ENCODE measurements at regions of chr22 and their contacts with region 1.

Region 1: GRCh38 chr22:43993027-43993760 is 30.9 kb upstream of the PARVB start:
- DNase-seq: peak; percentile 88
- H3K4me3 ChIP-seq: peak overlapping the region in 1 of 2 experiments; percentile 27; a peak in 1 of 4 replicates
- H3K27ac ChIP-seq: no peak overlapping the region; a peak in 1 of 4 replicates
- H3K4me1 ChIP-seq: peaks cover 0 to 6% of the 10 kb centered on the region in 2 experiments; a peak in 1 of 4 replicates
- H3K27me3 ChIP-seq: no peaks in the 10 kb centered on the region
- CTCF ChIP-seq: peak; percentile 98
- EP300 ChIP-seq: no peak
- RAD21 ChIP-seq: peak; percentile 91

Region 2: GRCh38 chr22:44003405-44004103 is 10.4 kb after region 1 on chr22:
- CTCF ChIA-PET with region 1: interaction called, 37 read pairs
- POLR2A ChIA-PET with region 1: interaction called, 3 read pairs
- DNase-seq: no peak
- H3K4me3 ChIP-seq: no peak overlapping the region
- H3K27ac ChIP-seq: no peak overlapping the region
- H3K4me1 ChIP-seq: no peaks in the 10 kb centered on the region
- H3K27me3 ChIP-seq: no peaks in the 10 kb centered on the region
- CTCF ChIP-seq: no peak
- EP300 ChIP-seq: no peak
- RAD21 ChIP-seq: no peak

Region 3: DNA sequence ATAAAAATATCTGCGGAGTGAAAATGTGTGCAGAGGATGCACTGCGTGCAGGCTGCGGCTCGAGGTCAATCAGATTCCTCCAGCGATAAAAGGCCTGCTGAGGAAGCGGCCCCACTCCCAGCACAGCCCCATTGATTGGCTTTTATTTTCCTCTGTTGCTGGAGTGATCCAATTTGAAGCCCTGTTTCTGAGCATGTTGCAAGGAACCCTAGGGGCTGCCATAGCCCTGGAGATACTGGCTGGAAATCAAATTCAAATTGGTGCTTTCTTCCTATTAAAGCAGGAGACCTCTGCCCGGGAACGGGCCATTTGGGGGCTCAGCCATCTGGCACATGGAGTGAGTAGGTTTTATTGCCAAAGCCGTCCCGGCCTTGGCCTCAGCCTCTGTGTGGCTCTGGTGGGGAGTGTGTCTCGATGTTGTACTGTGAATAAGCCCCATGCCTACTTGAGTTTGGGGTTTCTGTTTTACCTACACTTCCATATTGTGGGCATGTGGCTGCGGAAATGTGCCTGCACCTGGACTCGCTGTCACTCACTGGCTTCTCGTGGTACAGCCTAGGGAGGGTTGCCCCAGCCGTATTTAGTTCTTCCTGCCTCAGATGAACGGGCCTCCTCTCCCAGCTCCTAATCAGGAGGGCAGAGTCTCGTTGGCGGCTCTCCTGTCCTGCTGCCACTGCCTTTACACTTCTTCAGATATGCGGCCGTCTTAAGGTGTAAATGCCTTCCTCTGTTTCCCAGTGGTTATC is 56.5 kb after region 1 on chr22:
- CTCF ChIA-PET with region 1: interaction called, 10 read pairs
- POLR2A ChIA-PET with region 1: no interaction called
- DNase-seq: peak; percentile 82
- H3K4me3 ChIP-seq: no peak overlapping the region
- H3K27ac ChIP-seq: peak overlapping the region in 1 of 2 experiments; percentile 73; a peak in 2 of 4 replicates
- H3K4me1 ChIP-seq: peaks cover 0 to 23% of the 10 kb centered on the region in 2 experiments; a peak in 1 of 4 replicates
- H3K27me3 ChIP-seq: no peaks in the 10 kb centered on the region
- CTCF ChIP-seq: no peak
- EP300 ChIP-seq: 0 out of 4 replicates have a peak, but pooled peaks of 1 of the 2 experiments have one; percentile 47
- RAD21 ChIP-seq: no peak

Region 4: DNA sequence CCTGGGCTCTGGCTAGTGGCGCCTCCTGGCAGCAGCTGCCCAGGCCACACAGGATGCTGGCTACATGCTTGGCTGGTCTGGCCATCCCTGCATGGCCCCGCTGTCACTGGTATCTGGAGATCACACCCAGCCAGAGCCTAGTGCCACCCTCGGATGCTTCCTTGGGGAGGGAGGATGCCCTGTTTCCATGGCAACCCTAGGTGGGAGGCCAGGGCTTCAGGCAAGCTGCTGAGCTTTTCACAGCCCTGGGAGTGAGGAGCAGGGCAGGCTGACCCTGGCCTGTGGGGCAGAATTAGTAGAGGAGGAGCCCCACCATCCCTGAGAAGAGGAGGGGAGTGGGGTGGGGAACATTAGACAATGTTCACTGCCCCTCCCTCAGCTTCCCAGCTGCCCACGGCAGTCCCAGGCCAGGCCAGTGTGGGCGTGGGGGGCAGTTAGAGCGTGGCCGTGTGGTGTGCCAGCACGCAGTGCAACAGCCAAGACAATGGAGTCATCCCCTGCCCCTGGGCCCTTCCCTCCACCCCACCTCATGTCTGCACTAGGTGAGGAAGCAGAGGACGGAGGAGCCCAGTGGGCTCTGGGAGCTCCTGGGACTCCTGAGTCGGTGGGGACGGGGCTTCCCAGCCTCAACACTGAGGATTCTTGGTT is 81.3 kb after region 1 on chr22:
- CTCF ChIA-PET with region 1: interaction called, 22 read pairs
- POLR2A ChIA-PET with region 1: no interaction called
- DNase-seq: peak; percentile 90
- H3K4me3 ChIP-seq: no peak overlapping the region
- H3K27ac ChIP-seq: no peak overlapping the region
- H3K4me1 ChIP-seq: peaks cover 0 to 13% of the 10 kb centered on the region in 2 experiments; a peak in 1 of 4 replicates
- H3K27me3 ChIP-seq: no peaks in the 10 kb centered on the region
- CTCF ChIP-seq: no peak
- EP300 ChIP-seq: no peak
- RAD21 ChIP-seq: peak; percentile 54

Region 5: GRCh38 chr22:44107340-44107739 is 114.1 kb after region 1 on chr22:
- CTCF ChIA-PET with region 1: interaction called, 14 read pairs
- POLR2A ChIA-PET with region 1: no interaction called
- DNase-seq: no peak
- H3K4me3 ChIP-seq: no peak overlapping the region
- H3K27ac ChIP-seq: no peak overlapping the region
- H3K4me1 ChIP-seq: peaks cover 0 to 12% of the 10 kb centered on the region in 2 experiments; a peak in 1 of 4 replicates
- H3K27me3 ChIP-seq: no peaks in the 10 kb centered on the region
- CTCF ChIP-seq: no peak
- EP300 ChIP-seq: no peak
- RAD21 ChIP-seq: no peak

Region 6: DNA sequence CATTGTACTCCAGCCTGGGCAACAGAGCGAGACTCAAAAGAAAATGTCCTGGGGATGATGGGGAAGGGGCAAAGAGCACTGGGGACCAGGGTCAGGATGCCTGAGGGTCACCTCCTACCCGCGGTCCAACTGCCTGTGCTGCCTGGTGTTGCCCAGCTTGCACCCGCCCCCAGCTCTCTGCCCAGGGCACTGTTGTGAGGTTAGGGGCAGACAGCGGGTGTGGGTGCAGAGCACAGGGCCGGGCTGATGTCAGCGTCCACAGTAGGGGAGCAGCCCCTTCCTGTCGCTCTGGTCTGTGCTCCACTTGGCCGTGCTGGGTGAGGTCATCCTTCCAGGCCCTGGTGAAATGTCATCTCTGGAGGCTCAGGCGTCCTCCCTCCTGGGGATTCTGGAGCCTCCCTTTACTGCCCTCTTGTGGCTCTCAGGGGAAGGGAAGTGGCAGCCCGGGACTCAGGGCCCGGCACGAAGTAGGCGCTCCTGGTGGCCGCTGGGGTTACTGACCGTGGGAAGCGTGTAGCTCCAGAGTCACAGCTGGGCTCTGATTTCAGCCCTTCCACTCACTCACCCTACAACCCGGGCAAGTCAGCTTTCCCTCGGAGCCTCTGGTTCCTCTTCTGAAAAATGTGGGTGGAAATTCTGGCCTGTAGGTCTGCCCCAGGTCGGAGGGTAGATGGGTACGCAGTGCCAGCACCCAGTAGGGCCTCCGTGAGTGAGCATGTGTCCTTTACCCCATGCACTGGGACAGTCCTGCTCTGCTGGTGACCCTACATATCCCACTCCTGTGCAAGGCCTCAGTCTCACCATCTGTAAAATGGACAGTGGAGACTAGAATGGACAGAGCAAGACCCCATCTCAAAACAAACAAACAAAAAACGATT is 691.6 kb after region 1 on chr22:
- CTCF ChIA-PET with region 1: interaction called, 14 read pairs
- POLR2A ChIA-PET with region 1: no interaction called
- DNase-seq: peak; percentile 92
- H3K4me3 ChIP-seq: peak overlapping the region in 1 of 2 experiments; percentile 52; a peak in 1 of 4 replicates
- H3K27ac ChIP-seq: peak overlapping the region in 1 of 2 experiments; percentile 59; a peak in 1 of 4 replicates
- H3K4me1 ChIP-seq: peaks cover 0 to 16% of the 10 kb centered on the region in 2 experiments; a peak in 1 of 4 replicates
- H3K27me3 ChIP-seq: no peaks in the 10 kb centered on the region
- CTCF ChIP-seq: peak; percentile 97
- EP300 ChIP-seq: no peak
- RAD21 ChIP-seq: peak; percentile 72

Region 7: DNA sequence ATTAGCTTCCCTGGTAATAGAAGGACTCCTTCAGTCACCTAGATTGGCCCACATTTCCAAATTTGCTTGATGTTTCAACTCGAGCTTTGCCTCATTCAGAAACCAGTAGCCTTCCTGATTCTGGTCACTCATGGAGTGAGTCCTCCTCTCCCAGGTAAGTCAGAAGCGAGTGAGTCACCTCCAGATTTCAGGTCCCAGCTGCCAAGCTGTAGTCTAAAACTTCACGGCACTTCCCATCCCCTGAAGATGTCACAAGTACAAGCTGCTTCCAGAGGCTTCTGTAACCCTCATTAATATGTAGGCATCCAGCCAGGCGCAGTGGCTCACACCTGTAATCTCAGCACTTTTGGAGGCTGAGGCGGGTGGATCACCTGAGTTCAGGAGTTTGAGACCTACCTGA is 782.7 kb after region 1 on chr22:
- CTCF ChIA-PET with region 1: no interaction called
- POLR2A ChIA-PET with region 1: no interaction called
- DNase-seq: no peak
- H3K4me3 ChIP-seq: no peak overlapping the region
- H3K27ac ChIP-seq: no peak overlapping the region
- H3K4me1 ChIP-seq: no peaks in the 10 kb centered on the region
- H3K27me3 ChIP-seq: no peaks in the 10 kb centered on the region
- CTCF ChIP-seq: no peak
- EP300 ChIP-seq: no peak
- RAD21 ChIP-seq: no peak